Esophagus squamous epithelium (tissue), 5 donors: ENCODE measurements at regions of chr9 and their contacts with region 1.

Region 1: GRCh38 chr9:114906908-114907571 is 23.4 kb downstream of the TNFSF8 start:
- DNase-seq: no peak
- H3K4me3 ChIP-seq: no peak overlapping the region
- H3K27ac ChIP-seq: no peak overlapping the region
- H3K4me1 ChIP-seq: peaks cover 0 to 45% (median 14%) of the 10 kb centered on the region in 3 donors
- H3K27me3 ChIP-seq: no peaks in the 10 kb centered on the region
- CTCF ChIP-seq: peak; percentile 33 to 63 (median 49)
- POLR2A ChIP-seq: no peak

Region 2: GRCh38 chr9:114681594-114682332 is 225.3 kb before region 1 on chr9 and contains the start of gene TEX48:
- intact Hi-C with region 1: loop called (anchors 10 kb)
- DNase-seq: peak; percentile 14
- H3K4me3 ChIP-seq: no peak within 1 kb of the TSS
- H3K27ac ChIP-seq: no peak within 1 kb of the TSS
- H3K4me1 ChIP-seq: peaks cover 0 to 4% (median 0%) of the 10 kb centered on the region in 3 donors
- H3K27me3 ChIP-seq: peaks cover 0 to 23% (median 0%) of the 10 kb centered on the region in 4 donors
- CTCF ChIP-seq: peak; percentile 23 to 87 (median 70)
- POLR2A ChIP-seq: no peak
- total RNA-seq, gene TEX48: not detected

Region 3: GRCh38 chr9:114738581-114739316 is 168.3 kb before region 1 on chr9:
- intact Hi-C with region 1: loop called (anchors 5 kb)
- DNase-seq: peak; percentile 16
- H3K4me3 ChIP-seq: no peak overlapping the region
- H3K27ac ChIP-seq: no peak overlapping the region
- H3K4me1 ChIP-seq: peaks cover 0 to 7% (median 0%) of the 10 kb centered on the region in 3 donors
- H3K27me3 ChIP-seq: no peaks in the 10 kb centered on the region
- CTCF ChIP-seq: peak; percentile 77 to 94 (median 91)
- POLR2A ChIP-seq: no peak